Naive thymus-derived CD4-positive, alpha-beta T cell (primary cell): ENCODE measurements at regions of chr6 and their contacts with region 1.

Region 1: GRCh38 chr6:110039364-110039980 is 61.4 kb downstream of the GPR6 start:
- DNase-seq: peak; percentile 66 to 81 (median 78)
- ATAC-seq: peak; percentile 92
- H3K4me3 ChIP-seq: peak overlapping the region; percentile 54
- H3K4me3 Mint-ChIP-seq: peak overlapping the region; percentile 89 to 97 (median 90)
- H3K27ac ChIP-seq: peak overlapping the region; percentile 53
- H3K27ac Mint-ChIP-seq: peak overlapping the region; percentile 80 to 98 (median 92)
- H3K4me1 ChIP-seq: peaks cover 0 to 14% of the 10 kb centered on the region in 2 donors
- H3K4me1 Mint-ChIP-seq: peaks cover 9 to 17% (median 13%) of the 10 kb centered on the region in 7 donors
- H3K27me3 ChIP-seq: no peaks in the 10 kb centered on the region
- H3K27me3 Mint-ChIP-seq: no peaks in the 10 kb centered on the region

Region 2: DNA sequence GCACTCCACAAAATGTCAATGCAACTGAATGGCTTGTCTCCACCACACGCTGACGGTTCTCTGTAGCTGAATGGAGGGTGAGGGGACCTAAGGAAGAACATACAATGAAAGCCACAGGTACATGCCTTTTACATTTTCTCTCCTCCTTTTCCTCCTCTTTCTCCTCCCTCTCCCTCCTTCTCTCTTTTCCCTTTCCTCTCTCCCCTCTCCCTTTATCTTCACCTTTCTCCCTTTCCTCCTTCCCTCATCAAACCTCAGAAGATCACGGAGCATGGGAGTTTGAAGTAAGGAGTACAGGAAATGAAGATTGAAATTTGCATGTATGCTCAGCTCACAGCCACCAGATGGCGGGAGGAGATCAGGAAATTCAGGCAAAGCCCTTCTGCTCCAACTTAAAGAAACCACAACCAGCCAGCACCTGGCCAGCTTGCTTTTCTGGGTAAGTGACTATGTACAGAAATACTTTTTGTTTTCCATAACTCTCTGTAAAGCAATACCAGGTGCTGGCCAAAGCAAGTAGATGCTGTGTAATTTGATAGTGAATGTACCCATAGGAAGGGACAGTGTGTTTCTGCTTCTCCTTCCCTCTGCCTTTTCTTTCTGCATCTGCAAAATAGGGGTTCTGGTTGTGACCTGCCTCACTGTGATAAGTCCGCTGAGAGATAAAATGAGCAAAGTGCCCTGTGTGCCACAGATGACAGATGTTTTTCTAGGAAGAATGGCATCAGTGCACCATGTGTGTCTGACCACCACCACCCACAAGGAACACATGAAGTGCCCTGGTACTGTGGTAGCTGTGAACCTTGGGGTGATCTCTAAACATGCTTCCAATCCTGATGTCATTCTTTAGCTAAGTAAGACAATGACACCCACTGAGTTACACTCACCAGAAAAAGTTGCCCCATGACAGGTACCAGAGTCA is 1497.4 kb before region 1 on chr6:
- CTCF ChIA-PET with region 1: interaction called, 5 read pairs
- POLR2A ChIA-PET with region 1: no interaction called
- intact Hi-C with region 1: loop called in 1 of 2 experiments (anchors 5 kb)
- DNase-seq: peak in 8 of 9 donors; percentile 41 to 77 (median 70)
- ATAC-seq: peak; percentile 84
- H3K4me3 ChIP-seq: no peak overlapping the region
- H3K4me3 Mint-ChIP-seq: peak overlapping the region in 7 of 10 donors; percentile 2 to 67 (median 31)
- H3K27ac ChIP-seq: no peak overlapping the region
- H3K27ac Mint-ChIP-seq: peak overlapping the region in 1 of 9 donors; percentile 33
- H3K4me1 ChIP-seq: peaks cover 8 to 11% of the 10 kb centered on the region in 2 donors
- H3K4me1 Mint-ChIP-seq: peaks cover 7 to 18% (median 8%) of the 10 kb centered on the region in 7 donors
- H3K27me3 ChIP-seq: no peaks in the 10 kb centered on the region
- H3K27me3 Mint-ChIP-seq: peaks cover 0 to 52% (median 6%) of the 10 kb centered on the region in 5 donors

Region 3: DNA sequence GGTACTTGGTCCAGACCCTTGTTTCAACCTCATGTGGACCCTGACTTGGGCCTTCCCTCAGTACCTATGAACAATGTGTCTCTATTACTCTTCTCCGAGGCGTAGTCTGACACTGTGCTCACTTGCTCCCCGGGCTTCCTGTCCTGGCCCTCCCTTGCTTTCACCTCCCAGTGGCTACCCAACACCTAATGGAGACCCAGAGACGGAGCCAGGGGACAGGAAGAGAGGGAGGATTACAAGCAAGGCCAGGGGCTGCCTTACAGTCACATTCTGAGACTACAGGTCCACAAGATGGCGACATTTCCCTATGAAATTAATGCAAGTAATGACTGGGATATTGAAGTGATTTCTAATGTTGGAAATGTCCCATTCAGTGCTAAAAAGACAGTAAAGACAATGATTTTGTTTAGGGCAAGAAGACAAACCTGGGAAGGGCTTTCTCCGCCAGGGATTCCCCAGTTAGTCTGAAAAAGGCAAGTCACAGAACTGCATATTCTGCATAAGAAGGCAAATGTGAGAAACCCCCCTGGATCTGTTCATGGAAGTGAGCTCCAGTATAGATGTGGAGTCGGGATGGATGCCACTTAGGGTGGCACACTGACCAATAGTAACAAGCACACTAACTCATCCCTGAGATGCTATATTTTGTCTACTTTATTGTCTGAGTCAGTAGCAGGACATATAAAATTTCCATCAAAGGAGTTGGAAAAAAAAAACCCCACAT is 512.4 kb before region 1 on chr6:
- CTCF ChIA-PET with region 1: interaction called, 27 read pairs
- POLR2A ChIA-PET with region 1: no interaction called
- intact Hi-C with region 1: loop called (anchors 1 kb)
- DNase-seq: peak; percentile 7 to 70 (median 59)
- ATAC-seq: peak; percentile 79
- H3K4me3 ChIP-seq: no peak overlapping the region
- H3K4me3 Mint-ChIP-seq: no peak overlapping the region
- H3K27ac ChIP-seq: no peak overlapping the region
- H3K27ac Mint-ChIP-seq: peak overlapping the region in 1 of 9 donors; percentile 86
- H3K4me1 ChIP-seq: no peaks in the 10 kb centered on the region
- H3K4me1 Mint-ChIP-seq: peaks cover 0 to 4% (median 0%) of the 10 kb centered on the region in 7 donors
- H3K27me3 ChIP-seq: no peaks in the 10 kb centered on the region
- H3K27me3 Mint-ChIP-seq: peaks cover 0 to 6% (median 0%) of the 10 kb centered on the region in 5 donors

Region 4: DNA sequence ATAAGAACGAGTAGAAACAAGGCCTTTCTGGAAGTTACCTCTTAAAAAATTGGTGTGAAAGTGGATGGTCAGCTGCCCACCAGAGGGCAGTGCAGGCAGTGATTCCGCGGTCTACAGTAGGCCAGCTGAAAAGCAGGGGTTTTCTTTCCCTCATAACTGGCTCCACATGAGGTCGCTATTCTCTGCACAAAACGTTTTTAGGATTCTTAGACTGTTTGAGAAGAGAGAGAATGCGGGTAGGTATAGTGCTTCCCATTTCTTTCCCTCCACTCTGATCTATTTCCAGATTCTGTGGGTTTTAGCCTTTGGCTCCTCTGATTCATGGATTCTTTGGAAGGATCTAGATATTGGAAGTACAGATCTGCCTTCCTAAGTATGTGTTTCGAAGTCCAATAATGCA is 334.2 kb before region 1 on chr6:
- CTCF ChIA-PET with region 1: interaction called, 40 read pairs
- POLR2A ChIA-PET with region 1: interaction called, 3 read pairs
- intact Hi-C with region 1: loop called (anchors 1 kb)
- DNase-seq: peak; percentile 46 to 74 (median 61)
- ATAC-seq: peak; percentile 99
- H3K4me3 ChIP-seq: no peak overlapping the region
- H3K4me3 Mint-ChIP-seq: no peak overlapping the region
- H3K27ac ChIP-seq: no peak overlapping the region
- H3K27ac Mint-ChIP-seq: no peak overlapping the region
- H3K4me1 ChIP-seq: no peaks in the 10 kb centered on the region
- H3K4me1 Mint-ChIP-seq: peaks cover 7 to 62% (median 38%) of the 10 kb centered on the region in 7 donors
- H3K27me3 ChIP-seq: no peaks in the 10 kb centered on the region
- H3K27me3 Mint-ChIP-seq: no peaks in the 10 kb centered on the region

Region 5: GRCh38 chr6:109896341-109896740 is 143.1 kb before region 1 on chr6:
- CTCF ChIA-PET with region 1: no interaction called
- POLR2A ChIA-PET with region 1: no interaction called
- intact Hi-C with region 1: no loop called
- DNase-seq: no peak
- ATAC-seq: no peak
- H3K4me3 ChIP-seq: no peak overlapping the region
- H3K4me3 Mint-ChIP-seq: no peak overlapping the region
- H3K27ac ChIP-seq: no peak overlapping the region
- H3K27ac Mint-ChIP-seq: no peak overlapping the region
- H3K4me1 ChIP-seq: no peaks in the 10 kb centered on the region
- H3K4me1 Mint-ChIP-seq: peaks cover 0 to 2% (median 0%) of the 10 kb centered on the region in 7 donors
- H3K27me3 ChIP-seq: no peaks in the 10 kb centered on the region
- H3K27me3 Mint-ChIP-seq: peaks cover 5 to 22% (median 13%) of the 10 kb centered on the region in 5 donors

Region 6: DNA sequence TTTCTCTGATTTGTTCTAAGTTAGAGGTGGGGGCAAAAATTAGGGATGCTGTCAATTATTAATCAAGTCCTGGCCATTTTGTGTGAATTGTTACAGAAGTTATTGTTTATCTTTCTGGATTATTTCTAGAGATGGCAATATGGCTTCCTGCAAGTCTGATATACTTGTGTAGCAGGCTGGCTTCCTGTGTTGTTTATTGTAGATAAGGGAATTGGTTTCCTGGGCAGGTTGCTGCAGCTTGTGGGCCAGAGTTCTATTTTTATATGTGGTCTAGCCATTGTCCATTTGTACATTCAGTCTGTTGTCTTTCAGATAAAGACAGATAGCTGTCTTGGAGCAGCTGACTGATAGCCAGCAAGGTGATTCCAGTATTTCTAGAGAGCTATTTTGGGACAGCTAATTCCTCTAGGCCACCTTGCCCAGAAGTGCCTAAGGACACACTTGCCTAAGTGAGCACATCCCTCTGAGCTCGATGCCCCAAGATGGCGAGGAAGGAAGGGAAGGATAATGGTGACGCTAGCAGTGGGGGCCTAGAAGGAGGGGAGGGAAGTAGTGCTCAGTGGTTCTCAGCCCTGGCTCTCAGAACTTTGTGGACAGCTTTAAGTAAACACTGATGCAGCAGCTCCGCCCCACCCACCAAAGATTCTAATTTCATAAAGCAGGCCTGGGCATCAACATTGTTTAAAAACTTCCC is 350.4 kb after region 1 on chr6:
- CTCF ChIA-PET with region 1: interaction called, 39 read pairs
- POLR2A ChIA-PET with region 1: no interaction called
- intact Hi-C with region 1: loop called (anchors 1 kb)
- DNase-seq: no peak
- ATAC-seq: peak; percentile 67
- H3K4me3 ChIP-seq: no peak overlapping the region
- H3K4me3 Mint-ChIP-seq: peak overlapping the region in 1 of 10 donors; percentile 32
- H3K27ac ChIP-seq: no peak overlapping the region
- H3K27ac Mint-ChIP-seq: peak overlapping the region in 6 of 9 donors; percentile 7 to 85 (median 54)
- H3K4me1 ChIP-seq: peaks cover 0 to 3% of the 10 kb centered on the region in 2 donors
- H3K4me1 Mint-ChIP-seq: peaks cover 9 to 27% (median 23%) of the 10 kb centered on the region in 7 donors
- H3K27me3 ChIP-seq: no peaks in the 10 kb centered on the region
- H3K27me3 Mint-ChIP-seq: no peaks in the 10 kb centered on the region